ENCODE measurements at regions of chr16 and their contacts with region 1.

Region 1: DNA sequence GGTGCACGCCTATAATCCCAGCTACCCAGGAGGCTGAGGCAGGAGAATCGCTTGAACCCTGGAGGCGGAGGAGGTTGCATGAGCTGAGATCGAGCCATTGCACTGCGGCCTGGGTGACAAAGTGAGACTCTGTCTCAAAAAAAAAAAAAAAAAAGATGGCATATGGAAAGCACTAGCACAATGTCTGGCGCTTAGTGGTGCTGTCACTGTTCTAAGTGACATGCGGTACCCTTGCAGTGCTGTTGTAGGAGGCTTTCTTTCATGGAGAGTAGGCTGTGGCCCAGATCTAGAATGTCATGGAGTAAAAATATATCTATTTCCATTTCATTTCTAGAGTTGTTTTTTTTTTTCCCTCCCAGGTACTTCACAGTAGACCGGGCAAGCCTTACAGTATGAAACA is 14.6 kb upstream of the METTL9 start:
- DNase-seq: no peak
- H3K4me3 ChIP-seq: no peak overlapping the region
- H3K4me1 ChIP-seq: peaks cover 11% of the 10 kb centered on the region; the same call in 1 of the 2 replicates
- H3K27me3 ChIP-seq: no peaks in the 10 kb centered on the region

Region 2: GRCh38 chr16:21646721-21647561 is 62.1 kb after region 1 on chr16:
- in situ Hi-C with region 1: no loop called
- DNase-seq: no peak
- H3K4me3 ChIP-seq: no peak overlapping the region
- H3K4me1 ChIP-seq: peaks cover 7% of the 10 kb centered on the region
- H3K27me3 ChIP-seq: no peaks in the 10 kb centered on the region

Region 3: GRCh38 chr16:21694609-21695008 is 109.8 kb after region 1 on chr16:
- in situ Hi-C with region 1: no loop called
- DNase-seq: no peak
- H3K4me3 ChIP-seq: no peak overlapping the region
- H3K4me1 ChIP-seq: no peaks in the 10 kb centered on the region
- H3K27me3 ChIP-seq: peaks cover 3% of the 10 kb centered on the region; the same call in 1 of the 2 replicates

Region 4: GRCh38 chr16:22694887-22695382 is 1110.1 kb after region 1 on chr16:
- in situ Hi-C with region 1: loop called (anchors 5 kb)
- DNase-seq: no peak
- H3K4me3 ChIP-seq: no peak overlapping the region
- H3K4me1 ChIP-seq: no peaks in the 10 kb centered on the region
- H3K27me3 ChIP-seq: peaks cover 11% of the 10 kb centered on the region